ACHN (cell line): ENCODE measurements at regions of chr17 and their contacts with region 1.

Region 1: DNA sequence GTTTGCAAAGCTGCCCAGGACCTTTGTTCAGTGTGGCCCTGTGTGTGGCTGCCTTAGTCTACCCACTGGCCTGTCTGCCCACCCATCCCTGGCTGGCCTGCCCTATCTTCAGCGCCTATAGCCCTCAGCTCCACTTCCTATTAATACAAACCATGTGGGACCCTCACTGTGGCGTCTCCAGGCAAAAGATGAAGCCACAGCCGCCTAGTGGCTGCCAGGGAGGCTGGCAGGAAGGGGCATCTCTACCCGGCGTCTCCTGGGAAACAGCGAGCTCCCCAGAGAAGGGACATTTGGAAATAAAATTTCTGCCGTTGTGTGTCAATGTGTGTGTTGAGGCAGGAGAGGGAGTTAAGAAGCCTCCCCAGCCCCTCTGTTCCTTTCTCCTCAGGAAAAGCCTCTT is 31.5 kb downstream of the NEUROD2 start:
- DNase-seq: peak; percentile 38

Region 2: GRCh38 chr17:39461113-39461925 is 114.9 kb before region 1 on chr17 and contains the start of gene CDK12:
- in situ Hi-C with region 1: no loop called
- DNase-seq: peak; percentile 100

Region 3: DNA sequence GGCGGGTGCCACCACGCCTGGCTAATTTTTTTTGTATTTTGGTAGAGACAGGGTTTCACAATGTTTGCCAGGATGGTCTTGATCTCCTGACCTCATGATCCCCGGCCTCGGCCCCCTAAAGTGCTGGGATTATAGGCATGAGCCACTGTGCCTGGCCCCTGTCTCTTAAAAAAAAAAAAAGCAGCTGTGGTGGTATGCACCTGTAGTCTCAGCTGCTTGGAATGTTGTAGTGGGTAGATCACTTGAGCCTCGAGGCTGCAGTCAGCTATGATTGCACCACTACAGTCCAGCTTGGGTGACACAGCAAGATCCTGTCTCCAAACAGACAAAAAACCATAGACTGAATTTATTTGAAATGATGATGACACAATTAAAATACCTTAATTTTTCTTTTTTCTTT is 90.6 kb before region 1 on chr17:
- in situ Hi-C with region 1: no loop called
- DNase-seq: peak; percentile 87

Region 4: GRCh38 chr17:39538866-39539265 is 37.3 kb before region 1 on chr17:
- in situ Hi-C with region 1: loop called (anchors 5 kb)
- DNase-seq: no peak

Region 5: DNA sequence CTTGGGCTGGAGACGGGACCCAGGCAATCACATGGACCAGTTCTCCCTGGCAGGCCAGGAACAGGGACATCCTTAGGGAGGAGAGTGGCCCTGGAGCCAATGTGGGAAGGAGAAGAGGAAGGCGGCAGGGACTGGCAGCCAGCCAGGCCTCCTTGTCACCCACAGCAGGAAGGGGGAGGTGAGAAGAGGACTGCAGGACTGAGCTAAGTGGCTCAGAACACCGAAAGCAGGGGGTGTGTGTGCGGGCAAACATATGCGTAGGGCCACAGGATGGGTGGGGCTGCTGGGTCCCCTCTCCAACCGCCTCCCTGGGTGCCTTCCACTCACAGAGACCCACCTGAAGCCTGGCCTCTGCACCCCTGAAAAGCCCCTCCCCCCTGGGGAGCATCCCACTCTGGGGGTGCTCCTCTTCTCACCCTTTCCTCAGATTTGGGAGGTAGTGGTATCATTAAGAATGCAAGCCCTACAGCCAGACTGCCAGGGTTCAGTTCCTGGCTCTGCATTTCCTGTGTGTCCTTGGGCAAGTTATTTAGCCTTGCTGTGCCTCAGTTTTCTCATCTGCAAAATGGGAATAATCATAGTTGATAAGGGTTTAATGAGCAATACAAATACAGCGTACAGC is 100.1 kb after region 1 on chr17:
- in situ Hi-C with region 1: no loop called
- DNase-seq: no peak

Region 6: GRCh38 chr17:39687811-39688518 is 111.8 kb after region 1 on chr17 and contains the start of gene PGAP3:
- in situ Hi-C with region 1: no loop called
- DNase-seq: peak; percentile 94